ENCODE measurements at regions of chr15 and their contacts with region 1.

Region 1: GRCh38 chr15:64067564-64068030 is 21.3 kb upstream of the DAPK2 start:
- DNase-seq: peak; percentile 40
- ATAC-seq: peak; percentile 94
- H3K4me3 ChIP-seq: no peak overlapping the region
- H3K27ac ChIP-seq: no peak overlapping the region
- H3K4me1 ChIP-seq: peaks cover 13% of the 10 kb centered on the region
- H3K27me3 ChIP-seq: no peaks in the 10 kb centered on the region
- CTCF ChIP-seq: peak; percentile 72 to 83 (median 77)
- EP300 ChIP-seq: no peak
- POLR2A ChIP-seq: no peak
- RAD21 ChIP-seq: peak; percentile 89

Region 2: GRCh38 chr15:63826528-63826927 is 241.1 kb before region 1 on chr15:
- CTCF ChIA-PET with region 1: interaction called, 14 read pairs
- POLR2A ChIA-PET with region 1: interaction called, 3 read pairs
- RAD21 ChIA-PET with region 1: interaction called, 10 read pairs
- SMC1A ChIA-PET with region 1: interaction called, 7 read pairs
- in situ Hi-C with region 1: no loop called
- intact Hi-C with region 1: loop called (anchors 5 kb)
- DNase-seq: no peak
- ATAC-seq: no peak
- H3K4me3 ChIP-seq: no peak overlapping the region
- H3K27ac ChIP-seq: no peak overlapping the region
- H3K4me1 ChIP-seq: no peaks in the 10 kb centered on the region
- H3K27me3 ChIP-seq: no peaks in the 10 kb centered on the region
- CTCF ChIP-seq: peak; percentile 21 to 31 (median 27); a peak in 3 of 6 replicates
- EP300 ChIP-seq: no peak
- POLR2A ChIP-seq: no peak
- RAD21 ChIP-seq: peak; percentile 44

Region 3: DNA sequence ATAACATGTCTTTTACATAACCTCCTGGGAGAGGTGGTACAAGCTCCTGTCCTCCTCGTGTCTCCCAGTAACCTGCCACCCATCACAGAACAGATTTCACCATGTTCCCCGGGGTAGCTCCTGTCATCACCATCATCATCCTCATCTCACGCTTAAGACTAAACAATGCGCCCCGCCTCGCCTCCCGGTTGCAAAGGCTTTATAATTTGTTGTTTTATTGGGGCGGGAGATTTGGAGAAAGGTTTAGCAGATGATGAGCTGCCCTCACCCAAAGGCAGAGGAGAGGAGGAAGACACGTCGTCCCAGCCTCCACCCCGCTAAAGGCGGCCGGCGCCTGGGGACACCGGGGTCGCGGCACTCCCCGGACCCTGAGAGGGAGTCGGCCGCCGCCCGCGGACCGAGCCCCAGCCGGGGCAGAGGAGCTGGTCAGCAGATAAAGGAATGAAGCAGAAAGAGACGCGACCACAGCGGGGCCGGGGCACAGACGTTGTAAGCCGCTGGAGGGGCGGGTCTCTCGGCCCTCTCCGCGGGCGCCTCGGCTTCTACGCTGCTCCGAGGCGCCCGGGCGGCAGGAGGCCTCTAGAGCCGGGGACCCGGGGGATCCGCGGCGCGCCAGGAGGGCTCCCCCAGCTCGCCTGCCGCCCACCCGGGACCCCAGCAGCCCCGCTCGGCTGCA is 234.4 kb before region 1 on chr15:
- CTCF ChIA-PET with region 1: interaction called, 7 read pairs
- POLR2A ChIA-PET with region 1: no interaction called
- RAD21 ChIA-PET with region 1: interaction called, 4 read pairs
- SMC1A ChIA-PET with region 1: interaction called, 7 read pairs
- in situ Hi-C with region 1: no loop called
- intact Hi-C with region 1: loop called (anchors 5 kb)
- DNase-seq: no peak
- ATAC-seq: peak; percentile 68
- H3K4me3 ChIP-seq: peak overlapping the region; percentile 99
- H3K27ac ChIP-seq: peak overlapping the region; percentile 99
- H3K4me1 ChIP-seq: peaks cover 10% of the 10 kb centered on the region
- H3K27me3 ChIP-seq: no peaks in the 10 kb centered on the region
- CTCF ChIP-seq: no peak
- EP300 ChIP-seq: no peak
- POLR2A ChIP-seq: no peak
- RAD21 ChIP-seq: no peak

Region 4: GRCh38 chr15:64082757-64083156 is 15.2 kb after region 1 on chr15:
- CTCF ChIA-PET with region 1: interaction called, 73 read pairs
- POLR2A ChIA-PET with region 1: interaction called, 3 read pairs
- RAD21 ChIA-PET with region 1: no interaction called
- SMC1A ChIA-PET with region 1: interaction called, 16 read pairs
- in situ Hi-C with region 1: no loop called
- intact Hi-C with region 1: no loop called
- DNase-seq: no peak
- ATAC-seq: no peak
- H3K4me3 ChIP-seq: no peak overlapping the region
- H3K27ac ChIP-seq: no peak overlapping the region
- H3K4me1 ChIP-seq: no peaks in the 10 kb centered on the region
- H3K27me3 ChIP-seq: no peaks in the 10 kb centered on the region
- CTCF ChIP-seq: no peak
- EP300 ChIP-seq: no peak
- POLR2A ChIP-seq: no peak
- RAD21 ChIP-seq: no peak

Region 5: GRCh38 chr15:64180235-64180837 is 112.7 kb after region 1 on chr15:
- CTCF ChIA-PET with region 1: no interaction called
- POLR2A ChIA-PET with region 1: no interaction called
- RAD21 ChIA-PET with region 1: no interaction called
- SMC1A ChIA-PET with region 1: no interaction called
- in situ Hi-C with region 1: no loop called
- intact Hi-C with region 1: no loop called
- DNase-seq: peak; percentile 45
- ATAC-seq: peak; percentile 97
- H3K4me3 ChIP-seq: no peak overlapping the region
- H3K27ac ChIP-seq: peak overlapping the region; percentile 36
- H3K4me1 ChIP-seq: peaks cover 11% of the 10 kb centered on the region; the same call in 1 of the 2 replicates
- H3K27me3 ChIP-seq: no peaks in the 10 kb centered on the region
- CTCF ChIP-seq: no peak
- EP300 ChIP-seq: no peak
- POLR2A ChIP-seq: no peak
- RAD21 ChIP-seq: no peak

Measured in GM12878 (cell line).